Posterior cingulate gyrus (tissue), 11 donors: ENCODE measurements at regions of chr3 and their contacts with region 1.

Region 1: GRCh38 chr3:196609343-196609775 is 30.1 kb upstream of the NRROS start:
- DNase-seq: peak; percentile 52 to 96 (median 86)

Region 2: GRCh38 chr3:196632046-196632751 is 22.8 kb after region 1 on chr3:
- intact Hi-C with region 1: loop called (anchors 2 kb)
- DNase-seq: peak; percentile 67 to 96 (median 81)

Region 3: GRCh38 chr3:196665962-196666867 is 56.9 kb after region 1 on chr3:
- intact Hi-C with region 1: no loop called
- DNase-seq: peak in 8 of 10 donors; percentile 8 to 87 (median 32)

Region 4: GRCh38 chr3:196684548-196685407 is 75.4 kb after region 1 on chr3:
- intact Hi-C with region 1: loop called (anchors 1 kb)
- DNase-seq: peak in 7 of 10 donors; percentile 38 to 90 (median 62)

Region 5: DNA sequence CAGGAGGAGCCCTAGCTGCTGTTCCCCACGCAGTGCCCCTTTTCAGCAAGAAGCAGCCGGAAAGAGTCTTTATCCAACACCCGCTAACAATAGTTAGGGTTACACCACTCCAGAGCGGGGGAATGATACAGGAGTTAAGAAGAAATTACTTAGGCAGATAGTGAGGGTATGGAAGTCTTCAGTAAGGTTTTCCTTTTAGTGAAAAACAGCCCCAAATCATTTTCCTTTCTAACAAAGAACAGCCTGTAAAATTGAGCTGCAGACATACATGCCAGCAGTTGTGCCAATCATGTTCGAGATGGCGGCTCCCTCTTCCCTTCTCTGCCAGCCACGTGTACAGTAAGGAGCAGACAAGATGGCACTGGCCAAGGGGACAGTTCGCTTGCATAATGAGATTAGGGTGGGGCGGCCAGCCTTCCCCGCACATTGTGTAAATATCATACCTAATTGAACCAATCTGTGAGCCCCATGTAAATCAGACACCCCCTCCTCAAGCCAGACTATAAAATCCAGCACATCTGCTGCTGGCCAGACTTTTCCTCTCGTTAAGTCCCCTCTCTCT is 239.9 kb after region 1 on chr3:
- intact Hi-C with region 1: no loop called
- DNase-seq: no peak

Region 6: GRCh38 chr3:196969660-196970546 is 360.5 kb after region 1 on chr3:
- intact Hi-C with region 1: loop called (anchors 2 kb)
- DNase-seq: peak in 6 of 10 donors; percentile 35 to 92 (median 59)